ENCODE measurements at regions of chr7 and their contacts with region 1.

Region 1: GRCh38 chr7:44200647-44201461 is at the start of gene YKT6:
- DNase-seq: peak; percentile 73 to 94 (median 93)
- ATAC-seq: peak; percentile 99
- H3K4me3 ChIP-seq: peak within 1 kb of the TSS; percentile 95
- H3K4me3 Mint-ChIP-seq: peak within 1 kb of the TSS; percentile 81 to 90 (median 85)
- H3K27ac ChIP-seq: peak within 1 kb of the TSS; percentile 91
- H3K27ac Mint-ChIP-seq: peak within 1 kb of the TSS; percentile 19 to 88 (median 63)
- H3K4me1 ChIP-seq: peaks cover 15 to 16% of the 10 kb centered on the region in 2 donors
- H3K4me1 Mint-ChIP-seq: peaks cover 24 to 38% (median 32%) of the 10 kb centered on the region in 7 donors
- H3K27me3 ChIP-seq: no peaks in the 10 kb centered on the region
- H3K27me3 Mint-ChIP-seq: peaks cover 0 to 7% (median 3%) of the 10 kb centered on the region in 5 donors
- total RNA-seq, gene YKT6: 58.1 to 80.9 (median 62.3) TPM

Region 2: DNA sequence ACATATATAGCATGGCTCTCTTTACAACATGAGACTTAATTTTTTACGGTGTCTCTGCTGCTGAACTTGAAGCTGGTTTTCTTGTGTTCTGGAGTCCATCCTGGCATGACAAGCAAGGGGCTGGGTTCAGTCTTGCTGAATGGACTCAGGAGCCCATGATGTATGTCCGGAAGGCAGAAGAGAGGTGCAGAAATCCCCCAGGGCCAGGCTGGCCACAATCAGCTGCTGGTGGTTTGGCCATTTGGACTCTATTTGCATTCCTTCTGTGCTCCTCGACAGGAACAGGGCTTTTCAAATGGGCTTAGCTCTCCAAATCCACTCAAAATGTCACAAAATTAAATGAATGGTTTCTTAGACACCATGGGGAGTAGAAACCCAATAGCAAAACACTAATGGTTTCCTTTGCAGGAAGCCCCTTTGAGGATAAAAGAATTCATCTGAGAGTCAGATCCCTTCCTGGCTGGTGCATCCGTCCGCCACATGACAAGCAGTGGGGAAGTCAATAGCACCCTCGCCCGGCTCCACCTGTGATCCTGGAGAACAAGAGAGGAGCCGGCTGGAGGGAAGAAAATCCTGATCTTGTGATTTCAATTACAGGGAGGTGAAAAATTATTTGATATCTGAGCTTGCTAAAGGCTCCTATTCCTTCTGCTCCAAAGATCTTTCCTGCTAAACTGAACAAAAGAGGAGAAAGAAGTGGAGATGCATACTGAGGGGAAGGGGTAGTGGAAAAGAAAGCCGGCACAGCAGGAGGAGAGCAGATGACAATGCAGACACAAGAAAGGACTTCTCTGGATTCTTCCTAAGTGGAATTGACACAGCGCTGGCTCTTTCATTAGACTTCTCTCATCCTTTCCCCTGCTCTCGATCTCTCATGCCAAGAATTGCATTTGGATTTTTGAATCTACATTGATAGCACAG is 1479.7 kb before region 1 on chr7:
- CTCF ChIA-PET with region 1: no interaction called
- POLR2A ChIA-PET with region 1: no interaction called
- intact Hi-C with region 1: no loop called
- DNase-seq: no peak
- ATAC-seq: no peak
- H3K4me3 ChIP-seq: no peak overlapping the region
- H3K4me3 Mint-ChIP-seq: no peak overlapping the region
- H3K27ac ChIP-seq: no peak overlapping the region
- H3K27ac Mint-ChIP-seq: no peak overlapping the region
- H3K4me1 ChIP-seq: no peaks in the 10 kb centered on the region
- H3K4me1 Mint-ChIP-seq: no peaks in the 10 kb centered on the region
- H3K27me3 ChIP-seq: no peaks in the 10 kb centered on the region
- H3K27me3 Mint-ChIP-seq: peaks cover 0 to 30% (median 7%) of the 10 kb centered on the region in 5 donors

Region 3: GRCh38 chr7:42911454-42912447 is 1289.1 kb before region 1 on chr7 and contains the start of gene C7orf25:
- CTCF ChIA-PET with region 1: no interaction called
- POLR2A ChIA-PET with region 1: no interaction called
- intact Hi-C with region 1: loop called in 1 of 2 experiments (anchors 5 kb)
- DNase-seq: peak; percentile 92 to 97 (median 95)
- ATAC-seq: peak; percentile 95
- H3K4me3 ChIP-seq: peak within 1 kb of the TSS; percentile 64
- H3K4me3 Mint-ChIP-seq: peak within 1 kb of the TSS; percentile 81 to 98 (median 90)
- H3K27ac ChIP-seq: peak within 1 kb of the TSS; percentile 82
- H3K27ac Mint-ChIP-seq: peak within 1 kb of the TSS; percentile 81 to 95 (median 92)
- H3K4me1 ChIP-seq: peaks cover 9 to 18% of the 10 kb centered on the region in 2 donors
- H3K4me1 Mint-ChIP-seq: peaks cover 28 to 73% (median 53%) of the 10 kb centered on the region in 7 donors
- H3K27me3 ChIP-seq: no peaks in the 10 kb centered on the region
- H3K27me3 Mint-ChIP-seq: no peaks in the 10 kb centered on the region
- total RNA-seq, gene C7orf25: 2.3 to 10.9 (median 5.3) TPM

Region 4: DNA sequence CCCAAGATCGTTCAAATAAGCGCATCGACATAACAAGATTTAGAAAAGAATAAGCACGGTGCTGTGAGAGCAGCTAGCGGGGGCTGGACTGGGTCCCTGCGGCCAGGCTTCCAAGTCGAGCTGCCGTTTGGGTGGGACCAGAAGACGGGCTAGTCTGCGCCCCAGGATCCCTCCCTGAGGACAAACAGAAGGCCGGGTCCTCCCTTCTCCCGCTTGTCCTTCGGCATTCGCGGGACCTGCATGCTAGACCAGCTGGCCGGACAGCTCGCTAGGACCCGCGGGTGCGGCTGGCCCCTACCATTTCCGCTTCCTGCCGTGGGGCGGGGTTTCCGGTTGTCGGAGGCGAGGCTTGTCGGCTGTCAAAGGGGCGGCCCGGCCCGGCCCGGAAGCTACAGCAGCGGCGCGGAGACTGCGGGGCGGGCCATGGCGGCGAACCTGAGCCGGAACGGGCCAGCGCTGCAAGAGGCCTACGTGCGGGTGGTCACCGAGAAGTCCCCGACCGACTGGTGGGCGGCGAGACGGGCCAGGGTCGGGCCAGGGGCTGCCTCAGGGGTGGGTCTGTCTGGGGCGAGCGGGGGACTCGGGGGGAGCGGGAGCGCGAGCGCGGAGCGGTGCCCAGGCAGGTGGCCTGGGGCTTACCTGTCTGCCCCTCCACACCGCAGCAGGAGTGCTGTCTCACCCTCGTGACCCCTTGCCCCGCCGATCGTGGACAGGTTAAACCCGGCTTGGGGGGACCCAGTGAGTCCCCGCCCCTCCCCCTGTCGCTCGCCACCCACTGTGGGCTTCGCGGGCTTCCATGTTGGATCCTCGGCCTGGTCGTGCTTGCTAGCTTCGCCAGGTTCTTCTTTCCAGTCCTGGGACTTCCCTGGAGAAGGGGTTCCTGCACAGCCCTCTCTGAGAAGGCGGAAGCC is 156.3 kb before region 1 on chr7 and contains the start of gene DBNL:
- CTCF ChIA-PET with region 1: no interaction called
- POLR2A ChIA-PET with region 1: interaction called, 3 read pairs
- intact Hi-C with region 1: loop called in 1 of 2 experiments (anchors 1 kb)
- DNase-seq: peak; percentile 79 to 96 (median 84)
- ATAC-seq: peak; percentile 68
- H3K4me3 ChIP-seq: peak within 1 kb of the TSS; percentile 87
- H3K4me3 Mint-ChIP-seq: peak within 1 kb of the TSS; percentile 84 to 97 (median 92)
- H3K27ac ChIP-seq: peak within 1 kb of the TSS; percentile 93
- H3K27ac Mint-ChIP-seq: peak within 1 kb of the TSS; percentile 86 to 99 (median 96)
- H3K4me1 ChIP-seq: peaks cover 23 to 41% of the 10 kb centered on the region in 2 donors
- H3K4me1 Mint-ChIP-seq: peaks cover 38 to 60% (median 55%) of the 10 kb centered on the region in 7 donors
- H3K27me3 ChIP-seq: no peaks in the 10 kb centered on the region
- H3K27me3 Mint-ChIP-seq: no peaks in the 10 kb centered on the region
- total RNA-seq, gene DBNL: 112 to 182 (median 164) TPM

Region 5: GRCh38 chr7:44123190-44124003 is 77.5 kb before region 1 on chr7 and contains the start of gene POLD2:
- CTCF ChIA-PET with region 1: no interaction called
- POLR2A ChIA-PET with region 1: interaction called, 3 read pairs
- intact Hi-C with region 1: loop called (anchors 1 to 2 kb)
- DNase-seq: peak; percentile 88 to 99 (median 94)
- ATAC-seq: peak; percentile 99
- H3K4me3 ChIP-seq: peak within 1 kb of the TSS; percentile 89
- H3K4me3 Mint-ChIP-seq: peak within 1 kb of the TSS; percentile 82 to 97 (median 93)
- H3K27ac ChIP-seq: peak within 1 kb of the TSS; percentile 74
- H3K27ac Mint-ChIP-seq: peak within 1 kb of the TSS; percentile 40 to 96 (median 87)
- H3K4me1 ChIP-seq: peaks cover 8 to 9% of the 10 kb centered on the region in 2 donors
- H3K4me1 Mint-ChIP-seq: peaks cover 18 to 40% (median 39%) of the 10 kb centered on the region in 7 donors
- H3K27me3 ChIP-seq: no peaks in the 10 kb centered on the region
- H3K27me3 Mint-ChIP-seq: peaks cover 0 to 23% (median 0%) of the 10 kb centered on the region in 5 donors
- total RNA-seq, gene POLD2: 55.1 to 118 (median 69.2) TPM

Region 6: DNA sequence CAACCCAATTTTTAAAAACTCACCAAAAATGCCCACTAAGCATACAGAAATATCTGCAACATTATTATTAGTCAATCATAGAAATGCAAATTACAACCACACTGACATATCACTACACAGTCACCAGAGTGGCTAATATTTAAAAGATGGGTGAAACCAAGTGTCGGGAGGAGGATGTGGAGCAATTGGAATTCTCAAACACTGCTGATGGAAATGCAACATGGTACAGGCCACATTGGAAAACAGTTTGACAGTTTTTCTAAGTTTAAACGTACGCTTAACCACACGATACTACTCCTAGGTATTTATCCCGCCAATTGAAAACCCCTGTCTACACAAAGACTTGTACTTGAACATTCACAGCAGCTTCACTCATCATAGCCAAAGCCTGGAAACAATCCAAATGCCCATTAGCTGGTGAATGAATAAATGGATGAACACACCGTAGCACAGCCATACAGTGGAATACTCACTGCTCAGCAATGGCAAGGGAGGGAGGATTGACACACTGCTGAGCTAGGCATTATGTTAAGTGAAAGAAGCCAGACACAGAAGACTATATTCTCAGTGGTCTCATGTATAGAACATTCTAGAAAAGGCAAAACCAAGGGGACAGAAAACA is 27.9 kb before region 1 on chr7:
- CTCF ChIA-PET with region 1: no interaction called
- POLR2A ChIA-PET with region 1: no interaction called
- intact Hi-C with region 1: no loop called
- DNase-seq: no peak
- ATAC-seq: no peak
- H3K4me3 ChIP-seq: no peak overlapping the region
- H3K4me3 Mint-ChIP-seq: no peak overlapping the region
- H3K27ac ChIP-seq: no peak overlapping the region
- H3K27ac Mint-ChIP-seq: no peak overlapping the region
- H3K4me1 ChIP-seq: no peaks in the 10 kb centered on the region
- H3K4me1 Mint-ChIP-seq: peaks cover under 1 to 5% (median 2%) of the 10 kb centered on the region in 7 donors
- H3K27me3 ChIP-seq: no peaks in the 10 kb centered on the region
- H3K27me3 Mint-ChIP-seq: peaks cover 0 to 23% (median 3%) of the 10 kb centered on the region in 5 donors

Region 7: DNA sequence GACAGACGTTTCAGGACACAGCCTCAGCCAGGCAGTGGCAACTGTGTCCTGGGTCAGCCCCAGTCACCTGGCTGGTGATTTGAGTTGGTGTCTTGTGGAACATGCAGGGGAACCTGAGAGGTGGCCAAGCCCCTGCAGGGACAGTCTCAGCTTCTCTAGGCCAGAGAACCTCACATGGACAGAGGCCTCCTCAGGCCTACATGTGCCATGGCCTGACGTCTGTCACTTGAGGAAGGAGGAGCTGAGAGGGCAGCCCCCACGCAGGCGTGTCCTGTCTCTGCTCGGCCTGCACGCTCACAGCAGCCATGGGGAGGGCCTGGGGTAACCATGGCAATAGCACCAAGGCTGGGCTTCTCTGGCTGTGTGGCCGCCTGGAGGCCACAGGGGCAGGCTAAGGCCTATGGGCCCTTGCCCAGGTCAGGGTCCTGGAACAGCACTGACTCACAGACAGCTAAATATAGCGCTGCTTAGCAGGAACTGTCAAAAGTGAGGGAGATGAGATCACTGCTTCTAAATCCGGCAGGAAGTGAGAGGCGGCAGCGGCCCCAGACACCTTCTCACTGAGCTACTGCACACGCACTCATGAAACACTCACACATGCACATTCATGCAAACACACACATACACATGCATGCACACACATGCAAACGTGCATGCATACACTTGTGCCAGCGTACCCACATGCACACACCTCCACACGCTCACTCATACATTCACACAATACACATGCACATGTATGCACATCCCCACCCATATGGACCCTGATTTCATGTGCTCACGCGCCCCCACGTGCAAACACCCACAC is 57.0 kb after region 1 on chr7:
- CTCF ChIA-PET with region 1: no interaction called
- POLR2A ChIA-PET with region 1: interaction called, 12 read pairs
- intact Hi-C with region 1: loop called in 1 of 2 experiments (anchors 1 kb)
- DNase-seq: peak; percentile 44 to 75 (median 67)
- ATAC-seq: peak; percentile 83
- H3K4me3 ChIP-seq: peak overlapping the region; percentile 10
- H3K4me3 Mint-ChIP-seq: peak overlapping the region; percentile 22 to 87 (median 75)
- H3K27ac ChIP-seq: peak overlapping the region; percentile 79
- H3K27ac Mint-ChIP-seq: peak overlapping the region; percentile 82 to 96 (median 94)
- H3K4me1 ChIP-seq: peaks cover 17 to 20% of the 10 kb centered on the region in 2 donors
- H3K4me1 Mint-ChIP-seq: peaks cover 13 to 29% (median 26%) of the 10 kb centered on the region in 7 donors
- H3K27me3 ChIP-seq: no peaks in the 10 kb centered on the region
- H3K27me3 Mint-ChIP-seq: no peaks in the 10 kb centered on the region

Region 8: GRCh38 chr7:44267719-44268421 is 67.0 kb after region 1 on chr7:
- CTCF ChIA-PET with region 1: no interaction called
- POLR2A ChIA-PET with region 1: no interaction called
- intact Hi-C with region 1: no loop called
- DNase-seq: no peak
- ATAC-seq: no peak
- H3K4me3 ChIP-seq: no peak overlapping the region
- H3K4me3 Mint-ChIP-seq: no peak overlapping the region
- H3K27ac ChIP-seq: no peak overlapping the region
- H3K27ac Mint-ChIP-seq: no peak overlapping the region
- H3K4me1 ChIP-seq: no peaks in the 10 kb centered on the region
- H3K4me1 Mint-ChIP-seq: peaks cover 0 to 2% (median 0%) of the 10 kb centered on the region in 7 donors
- H3K27me3 ChIP-seq: no peaks in the 10 kb centered on the region
- H3K27me3 Mint-ChIP-seq: no peaks in the 10 kb centered on the region

Region 9: GRCh38 chr7:44581879-44582603 is 381.2 kb after region 1 on chr7 and contains the start of gene TMED4:
- CTCF ChIA-PET with region 1: no interaction called
- POLR2A ChIA-PET with region 1: no interaction called
- intact Hi-C with region 1: loop called in 1 of 2 experiments (anchors 2 kb)
- DNase-seq: peak; percentile 100
- ATAC-seq: peak; percentile 96
- H3K4me3 ChIP-seq: peak within 1 kb of the TSS; percentile 95
- H3K4me3 Mint-ChIP-seq: peak within 1 kb of the TSS; percentile 86 to 97 (median 92)
- H3K27ac ChIP-seq: peak within 1 kb of the TSS; percentile 90
- H3K27ac Mint-ChIP-seq: peak within 1 kb of the TSS; percentile 95 to 99 (median 98)
- H3K4me1 ChIP-seq: peaks cover 14 to 19% of the 10 kb centered on the region in 2 donors
- H3K4me1 Mint-ChIP-seq: peaks cover 13 to 43% (median 38%) of the 10 kb centered on the region in 7 donors
- H3K27me3 ChIP-seq: no peaks in the 10 kb centered on the region
- H3K27me3 Mint-ChIP-seq: peaks cover 0 to 12% (median 0%) of the 10 kb centered on the region in 5 donors
- total RNA-seq, gene TMED4: 70.0 to 98.5 (median 95.3) TPM

Measured in naive thymus-derived CD4-positive, alpha-beta T cell (primary cell).